IMR-90 (cell line): ENCODE measurements at regions of chr7 and their contacts with region 1.

Region 1: GRCh38 chr7:130069978-130070860 is at the start of gene KLHDC10:
- DNase-seq: peak; percentile 99
- ATAC-seq: peak; percentile 96
- H3K4me3 ChIP-seq: peak within 1 kb of the TSS; percentile 87
- H3K27ac ChIP-seq: peak within 1 kb of the TSS; percentile 60
- H3K4me1 ChIP-seq: peaks cover 6% of the 10 kb centered on the region
- H3K27me3 ChIP-seq: no peaks in the 10 kb centered on the region
- CTCF ChIP-seq: no peak
- POLR2A ChIP-seq: no peak
- RAD21 ChIP-seq: no peak
- total RNA-seq, gene KLHDC10: 27.1 and 34.2 TPM in 2 replicates

Region 2: DNA sequence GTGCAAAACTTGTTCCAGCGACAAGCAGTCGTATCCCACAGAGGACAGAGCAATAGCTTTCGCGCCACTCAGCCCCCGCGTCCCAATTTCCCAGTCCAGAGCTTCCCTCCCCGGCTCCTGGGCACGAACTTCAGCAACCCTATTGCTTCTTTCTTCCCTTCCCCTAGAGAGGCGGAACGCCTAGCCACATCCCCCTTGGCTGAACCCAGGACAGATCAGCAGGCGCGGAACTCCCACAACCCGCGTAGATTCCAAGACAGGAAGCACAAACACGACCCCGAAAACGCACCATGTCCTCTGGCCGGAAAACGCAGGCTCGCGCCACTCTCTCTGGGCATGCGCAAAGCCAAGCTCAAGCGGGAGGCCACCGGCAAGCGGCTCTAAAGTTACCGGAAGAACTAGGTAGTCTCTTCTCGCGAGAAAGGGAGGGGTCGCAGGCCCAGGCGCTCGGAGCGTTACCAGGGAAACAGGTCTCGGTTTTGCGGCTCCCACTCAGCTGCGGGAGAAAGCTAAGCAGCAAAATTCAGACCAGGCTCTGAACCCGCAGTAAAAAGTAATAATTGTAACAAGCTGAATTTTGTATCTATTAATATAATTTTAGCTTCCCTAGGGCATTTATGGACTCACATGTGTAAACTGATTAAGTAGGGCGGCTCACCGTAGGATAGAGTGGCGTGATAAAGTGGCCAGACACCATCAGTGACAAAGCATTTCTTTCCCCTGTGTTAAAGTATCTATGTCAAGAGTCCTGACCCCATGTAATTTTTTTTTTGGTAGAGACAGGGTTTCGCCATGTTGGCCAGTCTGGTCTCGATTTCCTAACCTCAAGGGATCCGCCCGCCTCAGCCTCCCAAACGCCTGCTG is 135.1 kb after region 1 on chr7 and contains the start of gene TMEM209:
- CTCF ChIA-PET with region 1: no interaction called
- POLR2A ChIA-PET with region 1: no interaction called
- dilution Hi-C with region 1: no loop called
- in situ Hi-C with region 1: no loop called
- intact Hi-C with region 1: loop called (anchors 2 kb)
- DNase-seq: peak; percentile 96
- ATAC-seq: peak; percentile 93
- H3K4me3 ChIP-seq: peak within 1 kb of the TSS; percentile 72
- H3K27ac ChIP-seq: peak within 1 kb of the TSS; percentile 89
- H3K4me1 ChIP-seq: peaks cover 3% of the 10 kb centered on the region
- H3K27me3 ChIP-seq: no peaks in the 10 kb centered on the region
- CTCF ChIP-seq: no peak
- POLR2A ChIP-seq: peak; percentile 83
- RAD21 ChIP-seq: no peak; the same call in 1 of the 2 replicates
- total RNA-seq, gene TMEM209: 11.1 and 11.3 TPM in 2 replicates

Region 3: DNA sequence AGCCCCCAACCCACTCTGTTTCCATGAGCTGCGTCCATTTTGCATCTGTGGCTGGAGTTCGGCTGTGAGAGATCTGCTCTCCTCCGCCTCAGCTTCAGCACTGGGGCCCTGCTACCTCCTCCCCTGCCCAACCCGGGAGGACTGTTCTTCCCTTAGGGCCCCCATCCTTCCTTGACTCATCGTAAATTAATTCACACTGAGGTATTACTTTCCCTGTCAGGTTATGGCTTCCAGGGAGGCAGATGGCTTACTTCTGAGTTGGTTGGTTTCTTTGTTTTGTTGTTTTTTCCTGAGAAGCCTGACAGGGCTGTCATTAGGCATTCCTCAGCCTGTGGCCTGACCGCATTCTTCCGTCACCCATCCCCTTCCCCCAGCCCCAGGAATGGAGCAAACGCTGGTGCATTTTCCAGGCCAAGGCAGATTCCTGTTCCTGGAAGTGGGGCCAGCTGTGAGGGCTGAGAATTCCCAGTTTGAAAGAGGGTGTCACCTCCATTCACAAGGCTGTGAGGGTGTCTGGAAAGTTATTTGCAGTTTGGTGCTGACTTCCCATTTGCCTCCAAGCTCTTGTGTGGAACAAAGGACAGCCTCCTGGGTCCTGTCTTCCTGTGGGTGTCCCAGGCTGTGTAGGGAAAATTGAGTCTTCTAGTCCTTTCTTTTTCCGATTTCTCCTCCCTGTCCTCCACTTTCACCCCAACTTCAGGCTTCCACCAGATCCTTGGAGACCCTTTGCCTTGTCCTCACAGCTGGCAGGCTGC is 286.1 kb after region 1 on chr7:
- CTCF ChIA-PET with region 1: interaction called, 4 read pairs
- POLR2A ChIA-PET with region 1: no interaction called
- dilution Hi-C with region 1: no loop called
- in situ Hi-C with region 1: no loop called
- intact Hi-C with region 1: loop called (anchors 2 kb)
- DNase-seq: peak; percentile 99
- ATAC-seq: peak; percentile 89
- H3K4me3 ChIP-seq: no peak overlapping the region
- H3K27ac ChIP-seq: peak overlapping the region; percentile 96
- H3K4me1 ChIP-seq: peaks cover 29% of the 10 kb centered on the region
- H3K27me3 ChIP-seq: no peaks in the 10 kb centered on the region
- CTCF ChIP-seq: no peak
- POLR2A ChIP-seq: peak; percentile 70; the same call in 1 of the 2 replicates
- RAD21 ChIP-seq: peak; percentile 30; the same call in 1 of the 2 replicates

Region 4: GRCh38 chr7:130486114-130486958 is 416.1 kb after region 1 on chr7:
- CTCF ChIA-PET with region 1: no interaction called
- POLR2A ChIA-PET with region 1: no interaction called
- dilution Hi-C with region 1: no loop called
- in situ Hi-C with region 1: loop called (anchors 10 kb)
- intact Hi-C with region 1: no loop called
- DNase-seq: no peak
- ATAC-seq: no peak
- H3K4me3 ChIP-seq: no peak overlapping the region
- H3K27ac ChIP-seq: no peak overlapping the region
- H3K4me1 ChIP-seq: peaks cover 7% of the 10 kb centered on the region
- H3K27me3 ChIP-seq: peaks cover 5% of the 10 kb centered on the region
- CTCF ChIP-seq: 0 out of 2 replicates have a peak, but pooled peaks have one; percentile 20
- POLR2A ChIP-seq: no peak
- RAD21 ChIP-seq: no peak

Region 5: DNA sequence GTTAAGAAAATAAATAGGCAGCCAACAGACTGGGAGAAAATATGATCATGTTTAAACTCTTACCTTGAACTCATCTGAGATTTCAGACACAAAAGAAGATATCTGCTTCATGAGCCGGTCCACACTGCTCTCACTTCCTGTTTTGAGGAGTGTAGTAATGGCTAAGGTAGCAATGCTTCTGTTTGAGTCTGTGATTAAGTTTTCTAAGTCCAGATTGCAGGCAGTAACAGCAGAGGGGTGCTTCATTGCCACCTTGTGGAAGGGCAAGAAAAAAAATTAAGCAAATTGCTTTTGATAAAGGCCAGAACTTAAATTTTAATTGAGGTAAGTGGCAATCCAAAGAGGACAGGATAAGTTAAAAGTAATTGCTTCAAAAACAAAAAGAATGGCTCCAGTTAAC is 490.8 kb after region 1 on chr7:
- CTCF ChIA-PET with region 1: no interaction called
- POLR2A ChIA-PET with region 1: no interaction called
- dilution Hi-C with region 1: no loop called
- in situ Hi-C with region 1: no loop called
- intact Hi-C with region 1: loop called (anchors 5 kb)
- DNase-seq: peak; percentile 43
- ATAC-seq: no peak
- H3K4me3 ChIP-seq: no peak overlapping the region
- H3K27ac ChIP-seq: no peak overlapping the region
- H3K4me1 ChIP-seq: no peaks in the 10 kb centered on the region
- H3K27me3 ChIP-seq: no peaks in the 10 kb centered on the region
- CTCF ChIP-seq: peak; percentile 36
- POLR2A ChIP-seq: no peak
- RAD21 ChIP-seq: peak; percentile 42

Region 6: GRCh38 chr7:130721486-130722280 is 651.5 kb after region 1 on chr7:
- CTCF ChIA-PET with region 1: interaction called, 3 read pairs
- POLR2A ChIA-PET with region 1: no interaction called
- dilution Hi-C with region 1: no loop called
- in situ Hi-C with region 1: loop called (anchors 10 kb)
- intact Hi-C with region 1: loop called (anchors 2 kb)
- DNase-seq: peak; percentile 69
- ATAC-seq: peak; percentile 100
- H3K4me3 ChIP-seq: no peak overlapping the region
- H3K27ac ChIP-seq: no peak overlapping the region
- H3K4me1 ChIP-seq: no peaks in the 10 kb centered on the region
- H3K27me3 ChIP-seq: peaks cover 25% of the 10 kb centered on the region
- CTCF ChIP-seq: peak; percentile 79
- POLR2A ChIP-seq: no peak
- RAD21 ChIP-seq: peak; percentile 85

Region 7: DNA sequence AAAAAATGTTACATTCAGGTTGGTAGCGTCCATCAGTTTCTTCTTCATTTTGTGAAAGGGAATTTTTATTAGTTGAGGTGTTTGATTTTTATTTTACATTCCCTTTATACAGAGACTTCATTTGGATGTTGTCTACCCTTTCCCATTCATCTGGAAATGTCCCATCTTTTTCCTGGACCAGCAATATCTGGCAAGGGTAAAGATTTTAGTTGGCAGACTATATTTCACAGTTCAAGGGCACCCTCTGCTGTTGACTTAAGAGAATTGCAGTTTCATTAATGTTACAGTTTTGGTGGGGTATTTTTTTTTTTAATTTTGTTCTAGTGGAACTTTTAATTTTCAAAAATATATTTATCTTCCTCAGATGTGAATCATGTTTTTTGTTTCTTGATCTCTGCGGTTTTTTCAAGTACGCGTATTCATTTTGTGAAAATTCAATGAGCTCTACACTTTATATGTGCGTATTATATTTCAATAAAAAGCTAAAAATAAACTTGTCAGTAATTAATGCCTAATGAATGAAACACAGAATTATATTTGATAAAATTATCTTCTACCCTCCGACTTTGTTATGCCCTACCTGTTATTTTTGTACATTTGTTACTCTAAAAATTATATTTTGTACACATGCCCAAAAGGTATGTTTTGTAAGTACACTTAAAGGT is 761.7 kb after region 1 on chr7:
- CTCF ChIA-PET with region 1: no interaction called
- POLR2A ChIA-PET with region 1: no interaction called
- dilution Hi-C with region 1: no loop called
- in situ Hi-C with region 1: no loop called
- intact Hi-C with region 1: loop called (anchors 2 kb)
- DNase-seq: peak; percentile 67
- ATAC-seq: peak; percentile 66
- H3K4me3 ChIP-seq: no peak overlapping the region
- H3K27ac ChIP-seq: no peak overlapping the region
- H3K4me1 ChIP-seq: peaks cover 2% of the 10 kb centered on the region; the same call in 1 of the 2 replicates
- H3K27me3 ChIP-seq: no peaks in the 10 kb centered on the region
- CTCF ChIP-seq: peak; percentile 81
- POLR2A ChIP-seq: no peak
- RAD21 ChIP-seq: peak; percentile 76